ENCODE measurements at regions of chr13 and their contacts with region 1.

Region 1: GRCh38 chr13:25574437-25575411 is 202.9 kb downstream of the ATP8A2 start:
- DNase-seq: peak in 2 of 3 donors; percentile 42 to 75
- ATAC-seq: peak; percentile 87 to 96 (median 95)
- H3K4me3 ChIP-seq: no peak overlapping the region
- H3K27ac ChIP-seq: no peak overlapping the region
- H3K4me1 ChIP-seq: no peaks in the 10 kb centered on the region
- H3K27me3 ChIP-seq: no peaks in the 10 kb centered on the region
- CTCF ChIP-seq: peak; percentile 77 to 84 (median 83)
- POLR2A ChIP-seq: no peak

Region 2: GRCh38 chr13:25489238-25489637 is 85.5 kb before region 1 on chr13:
- intact Hi-C with region 1: no loop called
- DNase-seq: no peak
- ATAC-seq: no peak
- H3K4me3 ChIP-seq: no peak overlapping the region
- H3K27ac ChIP-seq: no peak overlapping the region
- H3K4me1 ChIP-seq: no peaks in the 10 kb centered on the region
- H3K27me3 ChIP-seq: no peaks in the 10 kb centered on the region
- CTCF ChIP-seq: no peak
- POLR2A ChIP-seq: no peak

Region 3: DNA sequence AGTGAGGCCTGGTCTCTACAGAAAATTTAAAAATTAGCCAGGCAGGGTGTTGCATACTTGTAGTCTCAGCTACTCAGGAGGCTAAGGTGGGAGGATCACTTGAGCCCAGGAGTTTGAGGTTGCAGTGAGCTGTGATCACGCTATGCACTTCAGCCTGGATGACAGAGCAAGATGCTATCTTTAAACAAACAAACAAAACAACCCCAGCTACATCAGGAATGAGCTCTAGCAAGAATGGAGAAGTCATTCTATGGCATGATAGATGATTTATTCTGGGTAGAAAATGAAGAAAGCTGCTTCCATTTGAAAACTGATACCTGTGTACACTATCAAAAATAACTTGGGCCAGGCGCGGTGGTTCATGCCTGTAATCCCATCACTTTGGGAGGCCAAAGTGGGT is 492.9 kb after region 1 on chr13:
- intact Hi-C with region 1: loop called (anchors 5 to 10 kb)
- DNase-seq: no peak
- ATAC-seq: no peak
- H3K4me3 ChIP-seq: no peak overlapping the region
- H3K27ac ChIP-seq: no peak overlapping the region
- H3K4me1 ChIP-seq: no peaks in the 10 kb centered on the region
- H3K27me3 ChIP-seq: no peaks in the 10 kb centered on the region
- CTCF ChIP-seq: no peak
- POLR2A ChIP-seq: no peak

Region 4: GRCh38 chr13:26074706-26075105 is 500.0 kb after region 1 on chr13:
- intact Hi-C with region 1: loop called (anchors 5 to 10 kb)
- DNase-seq: no peak
- ATAC-seq: no peak
- H3K4me3 ChIP-seq: no peak overlapping the region
- H3K27ac ChIP-seq: no peak overlapping the region
- H3K4me1 ChIP-seq: no peaks in the 10 kb centered on the region
- H3K27me3 ChIP-seq: no peaks in the 10 kb centered on the region
- CTCF ChIP-seq: no peak
- POLR2A ChIP-seq: no peak

Measured in right lobe of liver (tissue), 6 donors.